AG04450 (cell line): ENCODE measurements at regions of chr20 and their contacts with region 1.

Region 1: GRCh38 chr20:31723319-31724078 is 831 bp upstream of the BCL2L1 start:
- DNase-seq: peak; percentile 96
- H3K4me3 ChIP-seq: peak overlapping the region; percentile 84
- H3K27ac ChIP-seq: peak overlapping the region; percentile 98
- H3K27me3 ChIP-seq: no peaks in the 10 kb centered on the region
- CTCF ChIP-seq: peak; percentile 93

Region 2: GRCh38 chr20:31474097-31474436 is 249.4 kb before region 1 on chr20:
- CTCF ChIA-PET with region 1: no interaction called
- POLR2A ChIA-PET with region 1: no interaction called
- DNase-seq: no peak
- H3K4me3 ChIP-seq: no peak overlapping the region
- H3K27ac ChIP-seq: no peak overlapping the region
- H3K27me3 ChIP-seq: peaks cover 31% of the 10 kb centered on the region
- CTCF ChIP-seq: no peak

Region 3: DNA sequence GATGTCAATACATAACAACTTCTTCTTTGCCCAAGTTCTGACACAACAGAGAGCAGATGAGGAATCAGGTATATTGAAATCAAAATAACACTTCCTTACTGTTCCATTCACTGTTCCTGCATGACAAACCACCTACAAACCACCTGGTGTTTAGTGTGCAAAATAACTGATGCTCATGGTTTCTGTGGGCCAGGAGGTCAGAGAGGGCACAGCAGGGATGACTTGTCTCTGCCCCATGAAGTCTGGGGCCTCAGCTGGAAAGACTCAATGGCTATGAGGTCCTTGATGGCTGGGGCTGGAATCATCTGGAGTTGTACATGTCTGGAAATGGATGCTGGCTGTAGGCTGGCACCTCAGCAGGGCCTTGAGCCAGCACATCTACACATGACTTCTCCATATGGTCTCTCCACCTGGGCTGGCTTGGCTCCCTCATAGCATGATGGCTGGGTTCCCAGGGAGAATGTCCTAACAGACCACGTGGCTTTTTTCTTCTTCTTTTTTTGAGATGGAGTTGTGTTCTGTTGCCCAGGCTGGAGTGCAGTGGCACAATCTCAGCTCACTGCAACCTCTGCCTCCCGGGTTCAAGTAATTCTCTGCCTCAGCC is 93.2 kb before region 1 on chr20:
- CTCF ChIA-PET with region 1: interaction called, 85 read pairs
- POLR2A ChIA-PET with region 1: interaction called, 3 read pairs
- DNase-seq: no peak
- H3K4me3 ChIP-seq: no peak overlapping the region
- H3K27ac ChIP-seq: no peak overlapping the region
- H3K27me3 ChIP-seq: no peaks in the 10 kb centered on the region
- CTCF ChIP-seq: no peak

Region 4: DNA sequence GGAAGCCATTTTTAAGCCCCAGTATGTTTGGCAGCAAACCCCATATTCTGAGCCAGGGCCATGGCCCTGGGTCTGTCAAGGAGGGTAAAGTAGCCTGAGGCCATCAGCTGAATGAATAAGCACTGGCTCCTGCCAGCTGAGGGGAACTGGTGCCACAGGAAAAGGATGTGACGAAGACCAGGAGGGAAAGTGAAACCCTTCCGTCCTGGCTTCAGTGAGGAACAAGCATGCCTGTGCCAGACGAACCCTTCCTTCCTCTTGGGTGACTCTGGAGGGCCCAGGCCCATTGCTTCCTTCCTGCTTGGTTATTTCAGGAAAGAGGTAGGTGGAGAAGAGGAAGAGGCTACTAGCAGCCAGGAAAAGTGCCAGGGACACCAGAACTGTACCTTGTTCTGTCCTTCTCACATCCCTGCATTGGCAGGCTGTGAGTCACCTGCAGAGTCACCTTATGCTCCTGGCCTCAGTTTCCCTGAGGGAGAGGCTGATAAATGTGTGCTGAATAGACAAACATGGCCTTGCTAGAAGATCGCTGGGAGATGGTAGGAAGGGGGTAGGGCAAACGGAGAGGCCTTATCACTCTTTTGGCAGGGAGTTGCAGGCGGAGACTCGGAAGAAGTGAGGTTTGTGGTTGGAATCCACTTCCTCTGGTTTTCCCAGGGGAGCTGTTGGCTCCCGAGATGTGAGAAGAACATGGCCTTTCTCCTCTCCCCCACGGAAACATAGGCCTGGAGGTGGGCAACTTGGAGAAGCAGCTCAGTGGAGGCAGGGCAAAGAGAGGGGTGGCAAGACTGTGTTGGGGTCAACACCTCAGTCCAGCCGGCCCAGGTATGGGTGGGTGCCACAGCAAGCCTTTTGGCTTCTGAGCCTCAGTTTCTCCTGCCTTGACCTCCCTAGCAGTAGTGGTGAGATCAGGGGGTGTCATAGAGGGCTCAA is 48.3 kb before region 1 on chr20:
- CTCF ChIA-PET with region 1: interaction called, 25 read pairs
- POLR2A ChIA-PET with region 1: interaction called, 7 read pairs
- DNase-seq: no peak
- H3K4me3 ChIP-seq: no peak overlapping the region
- H3K27ac ChIP-seq: peak overlapping the region; percentile 47
- H3K27me3 ChIP-seq: no peaks in the 10 kb centered on the region
- CTCF ChIP-seq: no peak

Region 5: DNA sequence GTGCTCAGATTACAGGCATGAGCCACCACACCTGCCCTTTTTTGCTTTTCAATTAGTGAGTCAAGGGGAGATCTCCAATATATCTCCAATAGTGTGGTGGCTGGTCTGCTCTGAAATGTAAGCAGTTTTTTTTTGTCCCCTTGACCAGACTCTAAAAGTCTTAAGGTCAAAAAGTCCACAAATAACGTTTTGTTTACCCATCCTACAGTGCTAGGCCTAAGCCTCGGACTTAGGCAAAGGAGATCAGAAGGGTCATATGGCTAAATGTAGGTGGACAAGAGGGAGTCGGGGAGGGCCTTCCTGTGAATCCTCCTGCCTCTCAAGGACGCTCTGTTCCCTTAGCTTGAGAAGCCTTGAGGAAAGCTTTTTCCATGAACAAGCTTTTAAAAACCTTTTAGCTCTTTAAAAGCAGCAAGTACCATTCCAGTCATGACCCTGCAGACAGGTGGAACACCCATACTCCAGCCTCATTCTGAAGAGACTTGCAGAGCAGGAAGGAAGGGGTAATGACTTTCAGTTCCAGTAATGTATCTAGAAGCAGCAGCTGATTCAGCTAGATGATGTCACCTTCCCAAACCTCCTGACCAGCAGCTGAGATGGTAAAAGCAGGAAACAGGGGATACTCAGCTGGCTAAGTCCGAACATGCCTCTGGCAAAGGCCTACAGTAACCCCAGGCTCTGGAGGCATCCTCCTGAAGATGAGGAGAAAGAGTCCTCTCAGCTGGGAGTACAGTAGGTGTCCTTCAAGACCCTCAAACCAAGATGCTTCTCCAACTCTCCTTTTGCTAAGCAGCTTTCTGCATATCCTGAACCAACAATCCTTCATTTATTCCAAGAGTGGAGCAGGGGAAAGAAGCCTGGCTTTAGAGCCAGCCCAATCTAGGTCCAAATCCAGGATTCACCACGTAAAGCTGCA is 24.4 kb before region 1 on chr20:
- CTCF ChIA-PET with region 1: interaction called, 77 read pairs
- POLR2A ChIA-PET with region 1: interaction called, 11 read pairs
- DNase-seq: peak; percentile 90
- H3K4me3 ChIP-seq: no peak overlapping the region
- H3K27ac ChIP-seq: peak overlapping the region; percentile 97
- H3K27me3 ChIP-seq: no peaks in the 10 kb centered on the region
- CTCF ChIP-seq: no peak

Region 6: DNA sequence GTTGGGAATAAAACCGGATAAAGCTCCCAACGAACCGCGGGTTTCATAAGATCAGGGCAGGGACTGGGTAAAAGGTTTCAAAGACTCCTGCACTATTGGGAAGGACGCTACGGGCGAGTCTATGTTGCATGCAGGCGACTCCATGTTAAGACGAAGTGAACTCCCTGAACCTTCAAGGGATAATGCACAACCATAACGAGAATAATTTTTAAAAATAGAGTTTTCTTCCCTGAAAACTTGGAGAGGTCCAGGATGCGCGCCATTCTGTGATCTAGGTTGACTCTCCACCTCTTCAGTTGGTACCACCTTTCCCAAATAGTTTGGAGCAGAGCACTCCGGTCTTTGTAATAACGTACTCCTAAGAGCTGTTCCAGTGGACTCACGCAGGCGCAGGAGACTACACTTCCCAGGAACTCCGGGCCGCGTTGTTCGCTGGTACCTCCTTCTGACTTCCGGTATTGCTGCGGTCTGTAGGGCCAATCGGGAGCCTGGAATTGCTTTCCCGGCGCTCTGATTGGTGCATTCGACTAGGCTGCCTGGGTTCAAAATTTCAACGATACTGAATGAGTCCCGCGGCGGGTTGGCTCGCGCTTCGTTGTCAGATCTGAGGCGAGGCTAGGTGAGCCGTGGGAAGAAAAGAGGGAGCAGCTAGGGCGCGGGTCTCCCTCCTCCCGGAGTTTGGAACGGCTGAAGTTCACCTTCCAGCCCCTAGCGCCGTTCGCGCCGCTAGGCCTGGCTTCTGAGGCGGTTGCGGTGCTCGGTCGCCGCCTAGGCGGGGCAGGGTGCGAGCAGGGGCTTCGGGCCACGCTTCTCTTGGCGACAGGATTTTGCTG is 15.4 kb after region 1 on chr20 and contains the start of gene TPX2:
- CTCF ChIA-PET with region 1: interaction called, 41 read pairs
- POLR2A ChIA-PET with region 1: interaction called, 4 read pairs
- DNase-seq: peak; percentile 86
- H3K4me3 ChIP-seq: peak within 1 kb of the TSS; percentile 97
- H3K27ac ChIP-seq: peak within 1 kb of the TSS; percentile 68
- H3K27me3 ChIP-seq: no peaks in the 10 kb centered on the region
- CTCF ChIP-seq: no peak; the same call in 1 of the 2 replicates
- polyA plus RNA-seq, gene TPX2: 19.8 and 24.4 TPM in 2 replicates

Region 7: DNA sequence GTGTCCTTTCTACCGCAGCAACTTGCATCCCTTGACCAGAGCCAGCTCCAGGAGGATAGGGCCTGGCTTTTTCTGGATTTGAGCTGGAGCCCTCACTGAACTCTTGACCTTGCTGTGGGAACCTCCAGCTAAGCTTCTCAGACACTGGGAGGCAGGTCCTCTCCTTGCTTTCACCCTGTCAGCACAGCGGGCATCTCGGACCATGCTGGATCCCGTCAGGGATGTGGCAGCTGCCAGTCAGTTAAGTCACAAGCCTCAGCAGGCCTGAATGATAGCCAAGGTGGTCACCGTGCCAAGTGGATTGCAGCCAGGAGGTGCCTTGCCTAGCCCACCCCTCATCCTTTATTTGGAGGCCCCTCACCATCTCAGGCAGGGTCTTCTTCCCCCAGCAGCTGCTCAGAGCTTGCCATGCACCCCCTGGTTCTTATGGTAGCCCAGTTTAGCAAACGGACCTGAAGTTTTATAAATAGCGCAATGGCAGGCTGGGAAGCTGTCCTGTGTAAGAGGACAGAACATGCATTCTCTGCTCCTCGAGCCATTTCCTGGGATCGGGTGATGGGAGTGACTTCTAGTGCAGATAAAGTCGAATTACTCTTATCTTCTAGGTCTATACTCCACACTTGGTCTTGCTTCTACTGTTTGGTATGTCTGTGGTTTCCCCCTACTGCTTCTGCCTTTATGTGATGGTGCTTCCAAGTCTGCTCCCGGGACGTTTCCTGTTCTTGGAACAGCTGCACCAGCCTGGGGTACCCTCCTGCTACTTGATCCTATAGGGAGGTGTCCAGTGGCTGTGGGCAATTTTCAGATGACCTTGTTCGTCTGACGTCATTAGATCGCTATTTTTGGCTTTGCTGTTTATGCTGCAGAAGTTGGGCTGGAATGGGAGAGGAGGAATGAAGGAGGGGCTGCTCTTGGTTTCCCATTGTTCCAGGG is 88.6 kb after region 1 on chr20:
- CTCF ChIA-PET with region 1: interaction called, 10 read pairs
- POLR2A ChIA-PET with region 1: no interaction called
- DNase-seq: peak; percentile 84
- H3K4me3 ChIP-seq: no peak overlapping the region; the same call in 1 of the 2 replicates
- H3K27ac ChIP-seq: peak overlapping the region; percentile 69
- H3K27me3 ChIP-seq: no peaks in the 10 kb centered on the region
- CTCF ChIP-seq: no peak